Psoas muscle (tissue), 8 donors: ENCODE measurements at regions of chr3 and their contacts with region 1.

Region 1: GRCh38 chr3:179706233-179706632 is 53.4 kb downstream of the USP13 start:
- DNase-seq: peak; percentile 25 to 61
- ATAC-seq: peak; percentile 80 to 92 (median 88)
- H3K4me3 ChIP-seq: no peak overlapping the region
- H3K27ac ChIP-seq: peak overlapping the region; percentile 92
- H3K4me1 ChIP-seq: peaks cover 48% of the 10 kb centered on the region
- H3K27me3 ChIP-seq: no peaks in the 10 kb centered on the region
- CTCF ChIP-seq: no peak

Region 2: DNA sequence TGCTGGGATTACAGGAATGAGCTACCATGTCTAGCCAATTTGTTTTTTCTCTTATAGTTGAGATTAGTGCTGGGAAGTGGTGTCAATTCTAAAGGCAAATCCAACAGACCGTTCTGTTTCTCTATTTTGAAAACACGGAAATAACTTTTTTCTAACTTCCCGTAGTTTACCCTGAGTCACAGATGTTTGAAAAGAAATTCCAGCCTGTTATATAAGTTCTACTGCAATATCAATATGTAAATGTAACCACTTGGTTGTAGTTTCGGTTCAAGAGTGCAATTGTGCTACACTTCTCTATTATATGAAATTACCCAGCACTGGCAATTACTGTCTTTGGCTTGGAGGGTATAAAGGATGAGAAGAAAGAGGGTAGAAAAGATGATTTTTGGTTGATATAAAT is 232.7 kb before region 1 on chr3:
- intact Hi-C with region 1: no loop called
- DNase-seq: no peak
- ATAC-seq: no peak
- H3K4me3 ChIP-seq: no peak overlapping the region
- H3K27ac ChIP-seq: no peak overlapping the region
- H3K4me1 ChIP-seq: peaks cover 4% of the 10 kb centered on the region
- H3K27me3 ChIP-seq: no peaks in the 10 kb centered on the region
- CTCF ChIP-seq: no peak

Region 3: DNA sequence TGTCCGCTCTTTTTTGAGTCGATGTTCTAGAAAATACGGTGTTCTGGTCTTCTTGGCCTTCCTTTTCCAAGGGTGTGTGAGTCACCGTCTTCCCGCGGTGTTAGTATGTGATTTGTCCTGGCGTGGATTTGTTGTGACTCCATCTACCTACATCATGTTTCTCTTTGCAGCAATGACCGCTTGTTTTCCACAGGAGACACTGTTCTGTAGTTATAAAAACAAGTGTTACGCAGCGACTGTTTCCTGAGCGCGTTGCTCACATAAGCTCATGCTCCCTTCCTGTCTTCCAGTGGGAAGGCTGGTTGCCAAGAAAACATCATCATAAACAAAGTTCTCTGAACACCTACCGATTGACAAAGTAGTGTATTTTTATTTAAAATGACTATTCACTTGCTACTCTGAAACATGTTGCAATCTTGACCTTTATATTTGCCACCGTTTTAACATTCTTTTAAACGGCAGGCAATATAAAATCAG is 34.4 kb before region 1 on chr3:
- intact Hi-C with region 1: loop called in 1 of 2 experiments (anchors 5 kb)
- DNase-seq: peak; percentile 17 to 75
- ATAC-seq: peak; percentile 79 to 89 (median 85)
- H3K4me3 ChIP-seq: peak overlapping the region; percentile 13
- H3K27ac ChIP-seq: peak overlapping the region; percentile 98
- H3K4me1 ChIP-seq: peaks cover 64% of the 10 kb centered on the region
- H3K27me3 ChIP-seq: no peaks in the 10 kb centered on the region
- CTCF ChIP-seq: no peak

Region 4: GRCh38 chr3:179794355-179794754 is 88.1 kb after region 1 on chr3:
- intact Hi-C with region 1: no loop called
- DNase-seq: peak in 1 of 2 donors; percentile 53
- ATAC-seq: peak; percentile 56 to 91 (median 80)
- H3K4me3 ChIP-seq: no peak overlapping the region
- H3K27ac ChIP-seq: no peak overlapping the region
- H3K4me1 ChIP-seq: peaks cover 6% of the 10 kb centered on the region
- H3K27me3 ChIP-seq: no peaks in the 10 kb centered on the region
- CTCF ChIP-seq: no peak